ENCODE measurements at regions of chr7 and their contacts with region 1.

Region 1: DNA sequence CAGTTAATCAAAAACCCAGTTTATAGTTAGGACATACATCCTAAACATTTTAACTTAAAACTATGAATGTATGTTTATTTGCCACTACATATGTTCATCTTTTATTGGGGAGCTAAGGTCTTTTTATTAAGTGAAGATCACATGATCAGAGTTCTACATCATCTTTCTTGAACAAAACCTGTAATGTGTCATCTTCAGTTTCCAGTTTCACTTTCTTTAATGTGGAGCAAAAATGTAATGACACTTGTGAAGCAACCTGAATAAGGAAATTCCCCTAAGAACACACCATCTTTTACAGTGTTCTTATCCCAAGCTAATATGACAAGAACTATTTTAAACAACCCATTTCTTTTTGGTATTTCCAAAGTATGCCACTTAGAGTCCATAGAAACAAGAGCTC is 166.7 kb upstream of the BET1 start:
- DNase-seq: no peak
- ATAC-seq: peak; percentile 40
- H3K4me3 Mint-ChIP-seq: no peak overlapping the region
- H3K27ac Mint-ChIP-seq: peak overlapping the region; percentile 24
- H3K4me1 Mint-ChIP-seq: peaks cover 22% of the 10 kb centered on the region
- H3K27me3 Mint-ChIP-seq: no peaks in the 10 kb centered on the region
- CTCF ChIP-seq: no peak

Region 2: GRCh38 chr7:94183289-94183749 is 12.5 kb after region 1 on chr7:
- CTCF ChIA-PET with region 1: no interaction called
- POLR2A ChIA-PET with region 1: interaction called, 3 read pairs
- intact Hi-C with region 1: loop called (anchors 1 kb)
- DNase-seq: no peak
- ATAC-seq: no peak
- H3K4me3 Mint-ChIP-seq: no peak overlapping the region
- H3K27ac Mint-ChIP-seq: no peak overlapping the region
- H3K4me1 Mint-ChIP-seq: peaks cover 8% of the 10 kb centered on the region
- H3K27me3 Mint-ChIP-seq: no peaks in the 10 kb centered on the region
- CTCF ChIP-seq: no peak